ENCODE measurements at regions of chr3 and their contacts with region 1.

Region 1: GRCh38 chr3:16728781-16729745 is 123.8 kb upstream of the DAZL start:
- DNase-seq: peak; percentile 90
- ATAC-seq: peak; percentile 86
- H3K4me3 ChIP-seq: peak overlapping the region; percentile 44
- H3K27ac ChIP-seq: peak overlapping the region; percentile 87
- H3K4me1 ChIP-seq: peaks cover 25% of the 10 kb centered on the region
- H3K27me3 ChIP-seq: no peaks in the 10 kb centered on the region
- CTCF ChIP-seq: no peak

Region 2: DNA sequence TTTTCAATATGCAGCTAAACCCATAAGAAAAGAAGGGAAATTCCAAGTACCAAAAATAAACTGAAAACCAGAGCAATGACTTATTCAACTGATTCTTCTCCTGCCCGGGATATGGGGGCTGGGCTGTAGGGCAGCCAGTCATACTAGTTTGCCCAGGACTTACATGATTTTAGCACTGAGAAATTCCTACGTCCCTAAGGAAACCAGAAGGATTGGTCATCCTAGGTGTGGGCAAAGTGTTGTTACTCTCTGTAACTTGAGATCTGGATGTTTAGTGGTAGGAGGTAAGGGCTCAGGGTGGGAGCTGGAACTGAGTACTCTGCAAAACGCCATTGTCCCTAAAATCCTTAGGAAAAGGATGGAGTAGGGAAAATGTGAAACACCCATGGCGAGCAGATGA is 122.7 kb before region 1 on chr3:
- CTCF ChIA-PET with region 1: no interaction called
- POLR2A ChIA-PET with region 1: no interaction called
- intact Hi-C with region 1: loop called (anchors 5 kb)
- DNase-seq: peak; percentile 90
- ATAC-seq: peak; percentile 89
- H3K4me3 ChIP-seq: no peak overlapping the region
- H3K27ac ChIP-seq: peak overlapping the region; percentile 56
- H3K4me1 ChIP-seq: peaks cover 27% of the 10 kb centered on the region
- H3K27me3 ChIP-seq: no peaks in the 10 kb centered on the region
- CTCF ChIP-seq: no peak

Region 3: DNA sequence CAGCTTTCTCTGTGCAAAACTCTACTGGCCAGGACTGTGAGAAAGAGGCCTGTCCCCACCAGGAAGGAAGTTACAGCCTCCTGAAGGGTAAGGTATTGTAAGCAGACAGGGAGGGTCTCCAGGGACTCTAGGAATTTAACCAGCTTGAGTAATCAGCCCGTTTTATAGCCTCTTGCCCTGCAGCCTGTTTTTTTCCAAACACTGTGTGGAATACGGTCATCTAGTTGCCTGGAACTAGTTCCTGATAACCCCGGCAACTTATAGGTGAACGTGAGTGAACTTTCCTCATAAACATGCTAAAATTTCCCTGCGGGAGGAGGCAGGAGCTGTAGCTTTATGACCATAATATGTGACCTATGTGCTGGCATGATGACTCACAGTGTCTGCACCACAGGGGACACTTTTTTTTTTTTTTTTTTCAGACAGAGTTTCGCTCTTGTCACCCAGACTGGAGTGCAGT is 63.8 kb before region 1 on chr3:
- CTCF ChIA-PET with region 1: no interaction called
- POLR2A ChIA-PET with region 1: no interaction called
- intact Hi-C with region 1: no loop called
- DNase-seq: peak; percentile 84
- ATAC-seq: peak; percentile 85
- H3K4me3 ChIP-seq: no peak overlapping the region; the same call in 1 of the 2 replicates
- H3K27ac ChIP-seq: 0 out of 2 replicates have a peak overlapping the region, but pooled peaks have one; percentile 3
- H3K4me1 ChIP-seq: peaks cover 11% of the 10 kb centered on the region
- H3K27me3 ChIP-seq: no peaks in the 10 kb centered on the region
- CTCF ChIP-seq: no peak

Region 4: DNA sequence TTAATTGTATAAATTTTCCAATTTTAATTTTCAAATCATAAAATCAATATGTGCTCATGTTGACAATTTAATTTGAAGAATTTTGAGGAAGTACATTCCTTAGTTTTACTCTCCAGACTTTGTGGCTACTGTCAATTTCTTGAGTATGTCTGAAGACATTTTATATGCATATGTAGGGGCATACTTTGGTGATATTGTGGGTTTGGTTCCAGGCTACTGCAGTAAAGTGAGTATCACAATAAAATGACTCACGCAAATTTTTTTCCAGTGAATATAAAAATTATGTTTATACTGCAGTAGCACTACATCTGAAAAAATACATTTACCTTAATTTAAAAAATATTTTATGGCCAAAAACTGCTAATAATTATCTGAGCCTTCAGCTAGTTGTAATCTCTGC is 32.5 kb after region 1 on chr3:
- CTCF ChIA-PET with region 1: no interaction called
- POLR2A ChIA-PET with region 1: no interaction called
- intact Hi-C with region 1: loop called (anchors 5 kb)
- DNase-seq: peak; percentile 90
- ATAC-seq: peak; percentile 94
- H3K4me3 ChIP-seq: no peak overlapping the region
- H3K27ac ChIP-seq: peak overlapping the region; percentile 35
- H3K4me1 ChIP-seq: peaks cover 26% of the 10 kb centered on the region
- H3K27me3 ChIP-seq: no peaks in the 10 kb centered on the region
- CTCF ChIP-seq: no peak

Measured in PC-3 (cell line).